Posterior cingulate gyrus (tissue), 11 donors: ENCODE measurements at regions of chr1 and their contacts with region 1.

Region 1: DNA sequence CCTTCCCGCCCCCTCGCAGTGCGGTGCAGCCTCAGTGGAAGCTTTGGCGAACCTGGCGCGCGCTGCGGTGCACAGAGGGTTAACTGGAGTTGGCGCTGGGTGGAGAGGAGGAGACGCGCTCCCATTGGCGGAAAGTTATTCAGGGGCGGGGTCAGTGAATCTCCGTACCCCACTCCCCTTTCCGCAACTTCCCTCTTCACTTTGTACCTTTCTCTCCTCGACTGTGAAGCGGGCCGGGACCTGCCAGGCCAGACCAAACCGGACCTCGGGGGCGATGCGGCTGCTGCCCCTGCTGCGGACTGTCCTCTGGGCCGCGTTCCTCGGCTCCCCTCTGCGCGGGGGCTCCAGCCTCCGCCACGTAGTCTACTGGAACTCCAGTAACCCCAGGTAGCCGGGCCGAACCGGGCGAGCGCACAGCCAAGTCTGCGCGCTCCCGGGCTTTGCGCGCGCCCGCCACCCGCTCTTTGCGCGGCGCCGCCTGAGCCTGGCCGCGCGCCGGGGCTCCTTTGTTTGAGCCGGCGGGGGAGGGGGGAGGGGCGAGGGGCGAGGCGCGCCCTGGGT is at the start of gene EFNA4:
- DNase-seq: peak in 7 of 10 donors; percentile 53 to 93 (median 67)

Region 2: GRCh38 chr1:154607609-154608396 is 455.8 kb before region 1 on chr1 and contains the start of gene ADAR:
- intact Hi-C with region 1: loop called (anchors 5 kb)
- DNase-seq: peak; percentile 57 to 93 (median 69)

Region 3: GRCh38 chr1:154669464-154670282 is 394.0 kb before region 1 on chr1:
- intact Hi-C with region 1: loop called (anchors 5 kb)
- DNase-seq: peak; percentile 57 to 96 (median 82)

Region 4: DNA sequence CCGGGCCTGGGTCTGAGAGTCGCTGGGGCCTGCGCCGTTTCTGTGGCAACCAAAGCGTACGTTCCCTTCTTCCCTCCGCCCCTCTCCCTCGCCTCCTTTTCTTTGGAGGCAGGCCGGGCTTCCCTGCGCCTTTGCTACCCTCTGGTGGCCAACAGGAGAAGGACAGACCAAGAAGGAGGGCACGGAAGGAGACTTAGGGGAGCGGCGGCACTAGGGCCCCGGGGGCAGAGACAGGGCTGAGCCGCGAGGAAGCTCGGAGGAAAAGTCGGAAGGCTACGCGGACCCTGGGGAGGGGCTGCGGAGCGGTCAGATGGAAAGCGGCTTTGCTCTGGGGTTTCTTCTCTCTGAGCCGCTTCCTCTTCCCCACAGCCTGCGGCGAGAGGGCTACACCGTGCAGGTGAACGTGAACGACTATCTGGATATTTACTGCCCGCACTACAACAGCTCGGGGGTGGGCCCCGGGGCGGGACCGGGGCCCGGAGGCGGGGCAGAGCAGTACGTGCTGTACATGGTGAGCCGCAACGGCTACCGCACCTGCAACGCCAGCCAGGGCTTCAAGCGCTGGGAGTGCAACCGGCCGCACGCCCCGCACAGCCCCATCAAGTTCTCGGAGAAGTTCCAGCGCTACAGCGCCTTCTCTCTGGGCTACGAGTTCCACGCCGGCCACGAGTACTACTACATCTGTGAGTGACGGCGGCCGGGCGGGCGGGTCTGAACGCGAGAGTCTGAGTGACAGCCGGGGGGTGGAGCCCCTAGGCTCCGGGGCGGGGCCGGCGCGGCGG is 21.3 kb after region 1 on chr1:
- intact Hi-C with region 1: loop called (anchors 2 kb)
- DNase-seq: peak; percentile 87 to 99 (median 92)

Region 5: GRCh38 chr1:155106850-155107249 is 43.2 kb after region 1 on chr1:
- intact Hi-C with region 1: no loop called
- DNase-seq: no peak

Region 6: DNA sequence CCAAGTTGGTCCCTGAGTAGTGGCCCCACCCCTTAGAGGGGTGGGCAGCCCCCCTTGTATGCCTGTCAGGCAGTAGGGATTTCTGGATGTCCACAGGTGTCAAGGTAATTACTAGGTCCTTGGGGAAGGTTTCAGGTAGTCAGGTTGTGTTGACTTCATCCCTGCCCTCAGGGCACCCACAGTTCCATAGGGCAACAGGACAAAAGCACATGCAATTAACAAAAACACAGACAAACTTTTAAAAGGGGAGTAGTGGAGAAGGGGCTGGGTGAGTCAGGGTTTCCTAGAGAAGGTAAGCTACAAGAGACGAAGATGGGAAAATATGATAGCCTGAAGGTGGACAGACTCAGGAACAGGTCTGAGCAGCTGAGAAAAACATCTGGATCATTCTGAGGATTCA is 95.3 kb after region 1 on chr1:
- intact Hi-C with region 1: no loop called
- DNase-seq: peak in 1 of 10 donors; percentile 8